CD8-positive, alpha-beta T cell (primary cell): ENCODE measurements at regions of chr22 and their contacts with region 1.

Region 1: DNA sequence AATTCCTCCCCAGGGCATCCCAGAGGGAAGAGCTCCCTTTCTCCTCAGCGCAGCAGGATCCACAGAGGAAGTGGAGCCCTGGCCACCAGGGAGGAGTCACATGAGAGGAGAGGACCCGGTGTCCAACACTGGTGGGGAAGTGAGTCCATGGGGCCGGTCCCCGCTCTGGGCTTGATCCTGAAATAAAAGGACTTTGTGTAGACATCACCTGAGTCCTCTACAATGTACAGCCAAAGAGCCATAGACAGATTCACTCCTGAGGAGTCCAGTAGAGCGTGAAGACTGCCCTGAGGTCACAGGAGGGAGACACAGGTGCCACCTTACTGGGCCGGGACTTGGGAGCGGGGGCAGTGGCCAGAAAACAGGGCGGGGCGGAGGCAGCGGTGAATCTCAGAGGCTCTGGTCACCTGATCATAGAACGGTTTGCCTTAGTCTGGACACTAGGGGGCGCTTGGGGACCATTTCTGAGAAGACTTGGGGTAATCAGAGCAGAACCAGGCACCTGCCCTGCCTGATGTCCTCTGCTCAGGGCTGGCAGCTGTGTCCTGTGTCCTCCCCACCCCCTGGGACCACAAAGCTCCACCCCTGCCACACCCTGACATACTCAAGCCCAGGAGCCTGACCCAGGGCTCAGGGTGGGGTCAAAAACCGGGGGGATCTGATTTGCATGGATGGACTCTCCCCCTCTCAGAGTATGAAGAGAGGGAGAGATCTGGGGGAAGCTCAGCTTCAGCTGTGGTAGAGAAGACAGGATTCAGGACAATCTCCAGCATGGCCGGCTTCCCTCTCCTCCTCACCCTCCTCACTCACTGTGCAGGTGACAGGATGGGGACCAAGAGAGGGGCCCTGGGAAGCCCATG is 112.7 kb downstream of the VPREB1 start:
- DNase-seq: peak; percentile 37 to 75 (median 68)
- ATAC-seq: peak; percentile 70
- H3K4me3 ChIP-seq: no peak overlapping the region
- H3K4me3 Mint-ChIP-seq: no peak overlapping the region
- H3K27ac ChIP-seq: no peak overlapping the region
- H3K27ac Mint-ChIP-seq: no peak overlapping the region
- H3K4me1 ChIP-seq: no peaks in the 10 kb centered on the region
- H3K4me1 Mint-ChIP-seq: peaks cover 5% of the 10 kb centered on the region
- H3K27me3 ChIP-seq: peaks cover 0 to 4% of the 10 kb centered on the region in 2 experiments
- H3K27me3 Mint-ChIP-seq: peaks cover 40% of the 10 kb centered on the region
- CTCF ChIP-seq: peak; percentile 53

Region 2: DNA sequence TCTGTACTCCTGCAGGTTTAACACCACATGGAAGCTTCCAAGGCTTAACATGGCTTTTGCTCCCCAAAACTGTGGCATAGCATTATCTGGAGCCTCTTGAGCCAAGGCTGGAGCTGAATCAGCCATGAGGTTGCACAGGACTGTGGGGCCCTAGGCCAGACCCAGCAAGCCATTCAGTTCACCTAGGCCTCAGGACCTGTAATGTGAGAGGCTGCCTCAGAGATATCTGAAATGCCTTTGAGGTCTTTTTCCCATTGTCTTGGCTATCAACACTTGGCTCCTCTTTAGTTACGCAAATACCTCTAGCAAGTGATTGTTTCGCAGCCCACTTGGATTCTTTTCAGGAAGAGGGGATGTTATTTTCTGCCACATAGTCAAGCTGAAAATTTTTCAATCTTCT is 40.7 kb before region 1 on chr22:
- CTCF ChIA-PET with region 1: no interaction called
- POLR2A ChIA-PET with region 1: no interaction called
- intact Hi-C with region 1: no loop called
- DNase-seq: no peak
- ATAC-seq: no peak
- H3K4me3 ChIP-seq: no peak overlapping the region
- H3K4me3 Mint-ChIP-seq: no peak overlapping the region
- H3K27ac ChIP-seq: no peak overlapping the region
- H3K27ac Mint-ChIP-seq: no peak overlapping the region
- H3K4me1 ChIP-seq: no peaks in the 10 kb centered on the region
- H3K4me1 Mint-ChIP-seq: no peaks in the 10 kb centered on the region
- H3K27me3 ChIP-seq: no peaks in the 10 kb centered on the region
- H3K27me3 Mint-ChIP-seq: no peaks in the 10 kb centered on the region
- CTCF ChIP-seq: no peak

Region 3: DNA sequence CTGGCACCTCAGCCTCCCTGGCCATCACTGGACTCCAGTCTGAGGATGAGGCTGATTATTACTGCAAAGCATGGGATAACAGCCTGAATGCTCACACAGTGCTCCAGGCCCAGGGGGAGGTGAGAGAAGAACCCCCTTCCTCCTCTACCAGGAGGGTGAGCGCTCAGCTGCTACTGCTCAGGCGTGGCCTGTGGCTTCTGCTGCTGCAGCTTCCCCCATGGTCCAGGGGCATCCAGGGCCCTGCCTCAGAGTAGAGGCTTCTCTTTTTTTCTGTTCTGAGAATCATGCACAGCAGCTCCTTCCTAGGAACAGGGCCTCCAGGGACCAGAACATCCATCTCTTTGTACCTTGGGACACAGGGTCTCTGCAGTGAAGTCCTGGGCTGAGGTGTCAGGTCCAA is 29.5 kb before region 1 on chr22:
- CTCF ChIA-PET with region 1: no interaction called
- POLR2A ChIA-PET with region 1: no interaction called
- intact Hi-C with region 1: no loop called
- DNase-seq: no peak
- ATAC-seq: no peak
- H3K4me3 ChIP-seq: no peak overlapping the region
- H3K4me3 Mint-ChIP-seq: no peak overlapping the region
- H3K27ac ChIP-seq: no peak overlapping the region
- H3K27ac Mint-ChIP-seq: no peak overlapping the region
- H3K4me1 ChIP-seq: no peaks in the 10 kb centered on the region
- H3K4me1 Mint-ChIP-seq: no peaks in the 10 kb centered on the region
- H3K27me3 ChIP-seq: no peaks in the 10 kb centered on the region
- H3K27me3 Mint-ChIP-seq: peaks cover 30% of the 10 kb centered on the region
- CTCF ChIP-seq: no peak

Region 4: DNA sequence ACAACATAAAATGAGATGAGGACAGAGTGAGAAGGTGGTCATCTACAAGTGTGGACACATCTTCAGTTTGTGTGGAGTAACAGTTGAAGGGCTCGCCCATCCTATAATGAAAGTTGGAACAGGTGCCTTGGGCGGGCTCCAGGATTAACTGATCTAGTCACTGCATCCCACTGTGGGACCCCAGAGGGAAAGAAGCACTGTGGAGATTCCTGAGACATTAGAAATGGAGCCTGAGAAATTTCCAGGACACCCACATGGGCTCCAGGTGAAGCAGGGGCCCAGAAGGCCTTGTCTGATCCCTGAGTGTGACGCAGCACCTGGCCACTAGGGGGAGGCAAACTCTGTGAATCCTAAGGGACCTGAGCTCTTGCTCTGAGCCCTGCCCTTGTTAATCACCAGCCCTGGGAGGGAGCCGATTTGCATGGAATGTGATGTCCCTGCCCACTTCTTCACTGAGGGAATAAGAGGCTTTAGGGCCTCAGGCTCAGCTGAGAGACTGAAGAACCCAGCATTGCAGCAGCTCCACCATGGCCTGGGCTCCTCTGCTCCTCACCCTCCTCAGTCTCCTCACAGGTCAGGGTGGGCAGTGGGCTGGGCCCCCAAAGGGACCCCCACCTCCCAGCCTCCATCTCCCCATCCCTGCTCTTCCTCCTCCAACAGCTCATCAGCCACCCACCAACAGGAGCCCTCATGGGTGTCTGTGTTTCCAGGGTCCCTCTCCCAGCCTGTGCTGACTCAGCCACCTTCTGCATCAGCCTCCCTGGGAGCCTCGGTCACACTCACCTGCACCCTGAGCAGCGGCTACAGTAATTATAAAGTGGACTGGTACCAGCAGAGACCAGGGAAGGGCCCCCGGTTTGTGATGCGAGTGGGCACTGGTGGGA is 14.3 kb before region 1 on chr22:
- CTCF ChIA-PET with region 1: interaction called, 13 read pairs
- POLR2A ChIA-PET with region 1: no interaction called
- intact Hi-C with region 1: no loop called
- DNase-seq: peak; percentile 37 to 78 (median 60)
- ATAC-seq: peak; percentile 61
- H3K4me3 ChIP-seq: no peak overlapping the region
- H3K4me3 Mint-ChIP-seq: no peak overlapping the region
- H3K27ac ChIP-seq: no peak overlapping the region
- H3K27ac Mint-ChIP-seq: no peak overlapping the region
- H3K4me1 ChIP-seq: no peaks in the 10 kb centered on the region
- H3K4me1 Mint-ChIP-seq: no peaks in the 10 kb centered on the region
- H3K27me3 ChIP-seq: no peaks in the 10 kb centered on the region
- H3K27me3 Mint-ChIP-seq: no peaks in the 10 kb centered on the region
- CTCF ChIP-seq: peak; percentile 81

Region 5: GRCh38 chr22:22375576-22376423 is 18.5 kb after region 1 on chr22:
- CTCF ChIA-PET with region 1: no interaction called
- POLR2A ChIA-PET with region 1: no interaction called
- intact Hi-C with region 1: loop called (anchors 1 to 2 kb)
- DNase-seq: no peak
- ATAC-seq: no peak
- H3K4me3 ChIP-seq: no peak overlapping the region
- H3K4me3 Mint-ChIP-seq: no peak overlapping the region
- H3K27ac ChIP-seq: no peak overlapping the region
- H3K27ac Mint-ChIP-seq: no peak overlapping the region
- H3K4me1 ChIP-seq: no peaks in the 10 kb centered on the region
- H3K4me1 Mint-ChIP-seq: no peaks in the 10 kb centered on the region
- H3K27me3 ChIP-seq: no peaks in the 10 kb centered on the region
- H3K27me3 Mint-ChIP-seq: peaks cover 40% of the 10 kb centered on the region
- CTCF ChIP-seq: no peak

Region 6: GRCh38 chr22:22823131-22823810 is 466.0 kb after region 1 on chr22:
- CTCF ChIA-PET with region 1: no interaction called
- POLR2A ChIA-PET with region 1: no interaction called
- intact Hi-C with region 1: no loop called
- DNase-seq: peak in 1 of 9 experiments; percentile 27
- ATAC-seq: no peak
- H3K4me3 ChIP-seq: no peak overlapping the region
- H3K4me3 Mint-ChIP-seq: peak overlapping the region; percentile 32
- H3K27ac ChIP-seq: peak overlapping the region; percentile 45 to 84
- H3K27ac Mint-ChIP-seq: peak overlapping the region; percentile 93
- H3K4me1 ChIP-seq: peaks cover 69% of the 10 kb centered on the region
- H3K4me1 Mint-ChIP-seq: peaks cover 87% of the 10 kb centered on the region
- H3K27me3 ChIP-seq: no peaks in the 10 kb centered on the region
- H3K27me3 Mint-ChIP-seq: no peaks in the 10 kb centered on the region
- CTCF ChIP-seq: no peak